ENCODE measurements at regions of chr4 and their contacts with region 1.

Region 1: DNA sequence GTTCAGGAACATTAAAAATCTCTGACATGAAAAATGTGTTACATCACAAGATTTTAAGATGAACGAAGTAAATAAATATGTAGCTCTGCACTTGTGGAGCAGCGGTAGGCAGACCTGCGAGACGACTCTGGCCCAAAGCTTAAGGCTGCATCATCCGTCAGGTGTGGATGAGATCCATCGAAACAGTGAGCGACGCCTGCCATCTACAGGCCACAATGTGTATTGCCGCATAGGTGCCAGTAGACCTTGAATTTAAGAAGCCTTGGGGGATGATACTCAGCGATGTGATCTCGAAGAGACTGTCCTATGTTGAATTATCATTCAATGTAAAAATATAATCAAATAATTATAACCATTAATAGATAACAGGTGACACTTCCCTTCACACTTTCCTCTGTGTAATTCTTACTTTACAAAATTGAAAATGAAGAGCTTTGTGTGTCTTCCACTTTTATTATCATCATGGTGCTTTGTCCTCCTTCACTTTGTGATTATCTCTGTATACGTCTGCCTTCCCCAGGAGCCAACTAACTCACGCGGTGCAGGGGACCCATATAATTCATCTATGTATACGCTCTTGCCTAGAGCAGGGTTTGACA is 851.0 kb downstream of the RAB28 start:
- DNase-seq: peak; percentile 58 to 78 (median 69)
- H3K4me3 ChIP-seq: no peak overlapping the region
- H3K27ac ChIP-seq: no peak overlapping the region
- H3K4me1 ChIP-seq: no peaks in the 10 kb centered on the region
- H3K27me3 ChIP-seq: no peaks in the 10 kb centered on the region

Region 2: DNA sequence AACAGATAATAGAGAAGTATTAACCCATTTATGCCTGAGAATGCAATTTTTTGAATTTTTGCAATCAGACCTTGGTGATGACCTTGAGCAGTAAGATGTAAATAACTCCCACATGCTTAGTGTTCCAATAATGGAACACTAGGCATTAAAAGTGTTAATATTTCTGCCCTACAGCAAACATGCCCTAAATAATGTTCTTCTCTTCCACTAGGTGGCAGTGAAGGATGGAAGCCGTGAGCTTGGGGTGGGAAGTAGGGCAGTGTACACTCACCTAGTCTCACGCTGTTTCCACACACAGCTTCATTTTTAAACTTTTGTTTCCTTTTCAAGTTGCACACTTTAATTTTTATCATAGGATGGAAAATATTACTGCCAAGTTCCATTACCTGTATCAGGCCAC is 591.3 kb before region 1 on chr4:
- CTCF ChIA-PET with region 1: interaction called, 15 read pairs
- POLR2A ChIA-PET with region 1: no interaction called
- DNase-seq: peak; percentile 21 to 44 (median 40)
- H3K4me3 ChIP-seq: no peak overlapping the region
- H3K27ac ChIP-seq: no peak overlapping the region
- H3K4me1 ChIP-seq: no peaks in the 10 kb centered on the region
- H3K27me3 ChIP-seq: no peaks in the 10 kb centered on the region